ENCODE measurements at regions of chr4 and their contacts with region 1.

Region 1: DNA sequence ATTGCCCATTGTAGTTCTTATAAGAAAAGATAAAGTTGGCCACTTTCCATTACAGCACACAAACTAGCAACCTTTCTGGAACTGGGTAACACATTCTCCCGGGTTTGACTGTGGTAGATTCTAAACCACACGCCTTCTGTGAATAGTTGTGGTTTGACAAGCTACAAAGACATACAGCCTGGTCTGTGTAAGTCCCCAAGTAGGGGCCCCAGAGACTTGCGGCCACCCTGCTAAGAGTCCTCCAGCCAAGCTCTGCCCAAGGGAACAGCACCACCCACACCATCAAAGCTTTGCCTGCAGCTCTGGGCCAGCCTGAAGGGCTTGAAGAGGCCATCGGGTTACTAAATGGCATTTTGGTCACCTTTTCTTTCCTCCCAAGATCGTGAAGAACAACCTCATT is 203.4 kb downstream of the MAML3 start:
- DNase-seq: no peak
- ATAC-seq: peak in 1 of 4 donors; percentile 18
- H3K4me3 ChIP-seq: no peak overlapping the region
- H3K27ac ChIP-seq: peak overlapping the region in 1 of 12 donors; percentile 70
- H3K4me1 ChIP-seq: peaks cover 0 to 33% (median 9%) of the 10 kb centered on the region in 12 donors
- H3K27me3 ChIP-seq: no peaks in the 10 kb centered on the region
- CTCF ChIP-seq: no peak
- POLR2A ChIP-seq: no peak

Region 2: DNA sequence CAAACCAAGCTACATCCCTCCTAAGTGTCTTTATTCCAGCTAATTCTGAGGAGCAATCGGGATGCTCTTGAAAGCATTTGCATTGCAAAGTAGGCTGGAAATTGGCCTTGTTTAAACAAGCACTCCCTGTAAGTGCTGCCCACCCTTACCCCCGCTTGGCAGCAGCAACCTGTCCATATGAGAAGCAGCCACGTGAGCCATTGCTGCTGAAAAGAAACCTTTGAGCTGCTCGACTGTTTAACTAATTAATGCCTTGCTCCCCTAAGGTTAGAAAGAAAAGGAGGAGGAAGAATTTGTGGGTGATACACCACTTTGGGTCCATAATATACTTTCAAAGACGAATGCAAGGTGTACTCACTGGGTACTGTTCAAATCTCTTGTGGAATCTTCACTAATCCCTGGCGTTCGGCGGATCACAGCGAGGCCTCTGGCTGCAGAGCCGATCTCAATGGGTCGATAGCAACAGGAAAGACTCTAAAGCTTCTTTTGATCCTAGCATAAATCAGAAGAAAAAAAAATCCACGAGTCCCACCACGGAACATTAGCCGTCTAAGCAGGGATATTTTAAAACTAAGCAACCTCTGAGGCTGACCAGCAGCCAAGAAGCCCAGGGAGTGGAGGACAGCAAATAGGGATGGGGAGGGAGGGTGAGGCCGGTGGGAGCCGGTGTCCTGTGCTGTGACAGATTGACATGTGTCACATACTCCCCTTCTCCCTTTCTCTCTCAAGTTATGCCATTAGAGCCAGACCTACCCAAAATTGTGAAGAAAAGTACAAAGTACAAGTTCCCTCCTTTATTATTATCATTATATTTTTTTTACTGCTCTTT is 322.2 kb before region 1 on chr4:
- intact Hi-C with region 1: no loop called
- DNase-seq: no peak
- ATAC-seq: no peak
- H3K4me3 ChIP-seq: no peak overlapping the region
- H3K27ac ChIP-seq: no peak overlapping the region
- H3K4me1 ChIP-seq: peaks cover 0 to 7% (median 0%) of the 10 kb centered on the region in 12 donors
- H3K27me3 ChIP-seq: no peaks in the 10 kb centered on the region
- CTCF ChIP-seq: no peak
- POLR2A ChIP-seq: no peak

Region 3: GRCh38 chr4:139887962-139888735 is 62.4 kb before region 1 on chr4:
- intact Hi-C with region 1: loop called in 1 of 10 experiments (anchors 5 kb)
- DNase-seq: no peak
- ATAC-seq: no peak
- H3K4me3 ChIP-seq: no peak overlapping the region
- H3K27ac ChIP-seq: peak overlapping the region in 1 of 12 donors; percentile 40
- H3K4me1 ChIP-seq: peaks cover 0 to 25% (median 0%) of the 10 kb centered on the region in 12 donors
- H3K27me3 ChIP-seq: no peaks in the 10 kb centered on the region
- CTCF ChIP-seq: no peak
- POLR2A ChIP-seq: no peak